HEK293 (cell line): ENCODE measurements at regions of chr11 and their contacts with region 1.

Region 1: GRCh38 chr11:61401558-61401957 is 9.2 kb downstream of the TMEM216 start:
- H3K4me3 ChIP-seq: no peak overlapping the region
- H3K27ac ChIP-seq: no peak overlapping the region
- H3K4me1 ChIP-seq: no peaks in the 10 kb centered on the region
- CTCF ChIP-seq: no peak

Region 2: GRCh38 chr11:61129639-61130523 is 271.7 kb before region 1 on chr11:
- CTCF ChIA-PET with region 1: no interaction called
- POLR2A ChIA-PET with region 1: no interaction called
- H3K4me3 ChIP-seq: no peak overlapping the region
- H3K27ac ChIP-seq: no peak overlapping the region
- H3K4me1 ChIP-seq: no peaks in the 10 kb centered on the region
- CTCF ChIP-seq: peak; percentile 98

Region 3: GRCh38 chr11:61429691-61430582 is 28.4 kb after region 1 on chr11 and contains the starts of genes CPSF7 and SDHAF2:
- CTCF ChIA-PET with region 1: no interaction called
- POLR2A ChIA-PET with region 1: interaction called, 12 read pairs
- H3K4me3 ChIP-seq: peak within 1 kb of the TSS; percentile 99
- H3K27ac ChIP-seq: peak within 1 kb of the TSS; percentile 99
- H3K4me1 ChIP-seq: no peaks in the 10 kb centered on the region
- CTCF ChIP-seq: peak; percentile 49